PC-9 (cell line): ENCODE measurements at regions of chr3 and their contacts with region 1.

Region 1: DNA sequence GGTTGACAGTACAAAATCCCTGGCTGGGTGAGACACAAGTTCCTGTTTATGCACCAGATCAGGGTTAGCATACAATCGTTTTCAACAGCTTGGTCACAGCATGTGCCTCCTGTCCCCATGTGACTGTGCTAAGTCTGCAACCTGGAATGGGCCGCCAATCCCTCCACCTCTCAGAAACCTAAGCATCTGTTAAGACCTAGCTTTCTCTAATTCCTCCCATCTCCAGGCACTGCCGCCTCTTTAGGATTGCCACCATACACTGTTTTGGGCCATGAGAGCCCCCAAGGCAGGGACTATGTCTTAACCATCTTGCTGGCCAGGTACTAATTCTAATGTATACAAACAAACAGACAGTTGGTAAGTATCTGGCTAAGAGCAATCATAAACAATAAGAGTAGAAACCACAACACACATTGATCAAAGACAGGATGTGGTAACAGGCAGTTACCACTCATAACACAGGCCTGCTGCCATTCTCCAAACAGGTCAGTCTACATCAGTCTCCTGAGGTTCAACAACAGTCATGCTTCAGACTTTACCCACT is 25.6 kb downstream of the SEC22C start:
- DNase-seq: peak in 1 of 2 experiments; percentile 37
- H3K4me3 ChIP-seq: no peak overlapping the region
- H3K27ac ChIP-seq: no peak overlapping the region
- H3K4me1 ChIP-seq: no peaks in the 10 kb centered on the region
- H3K27me3 ChIP-seq: no peaks in the 10 kb centered on the region
- CTCF ChIP-seq: no peak

Region 2: GRCh38 chr3:42600111-42600988 is 44.2 kb after region 1 on chr3 and contains the start of gene NKTR:
- CTCF ChIA-PET with region 1: no interaction called
- POLR2A ChIA-PET with region 1: no interaction called
- intact Hi-C with region 1: no loop called
- DNase-seq: peak; percentile 98 to 99
- H3K4me3 ChIP-seq: peak within 1 kb of the TSS; percentile 74
- H3K27ac ChIP-seq: peak within 1 kb of the TSS; percentile 86
- H3K4me1 ChIP-seq: peaks cover 27% of the 10 kb centered on the region
- H3K27me3 ChIP-seq: no peaks in the 10 kb centered on the region
- CTCF ChIP-seq: no peak
- total RNA-seq, gene NKTR: 66.0 and 70.5 TPM in 2 replicates

Region 3: DNA sequence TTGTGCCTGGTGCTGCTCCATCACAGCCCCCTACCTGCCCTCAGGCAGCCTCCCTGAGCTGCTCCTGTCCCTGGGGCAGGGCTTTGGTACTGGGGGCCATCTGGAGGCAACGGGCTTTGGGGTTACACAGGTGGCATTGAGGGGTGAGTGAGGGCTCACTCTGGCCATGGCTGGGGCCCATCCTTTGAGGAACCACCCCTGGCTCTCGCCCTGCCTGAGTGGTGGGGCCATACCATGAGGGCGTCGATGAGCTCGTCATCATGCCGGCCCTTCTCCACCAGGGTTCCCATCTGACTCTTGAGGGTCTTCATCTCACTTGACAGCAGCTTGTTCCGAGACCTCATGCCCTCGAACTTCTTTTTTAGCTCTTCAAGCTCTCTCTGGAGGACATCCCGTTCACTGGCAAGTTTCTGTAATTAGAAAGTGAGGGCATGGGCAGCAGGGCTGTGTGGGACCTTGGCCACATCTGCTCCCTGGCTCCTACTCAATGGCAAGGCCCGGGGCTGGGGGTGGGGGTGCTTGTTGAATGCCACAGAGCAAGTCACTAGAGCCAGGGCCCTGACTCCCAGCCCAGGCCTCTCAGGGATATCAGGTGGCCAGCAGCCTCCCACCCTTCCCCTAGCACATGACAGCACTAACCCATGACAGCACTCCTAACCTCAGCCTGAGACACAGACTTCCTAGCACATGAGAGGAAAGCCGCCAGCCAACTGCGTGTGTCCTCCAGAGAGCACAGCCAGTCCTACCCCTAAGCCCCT is 183.4 kb after region 1 on chr3:
- CTCF ChIA-PET with region 1: no interaction called
- POLR2A ChIA-PET with region 1: no interaction called
- intact Hi-C with region 1: loop called (anchors 5 kb)
- DNase-seq: no peak
- H3K4me3 ChIP-seq: no peak overlapping the region
- H3K27ac ChIP-seq: no peak overlapping the region
- H3K4me1 ChIP-seq: no peaks in the 10 kb centered on the region
- H3K27me3 ChIP-seq: 0 out of 2 replicates have a peak, but pooled peaks cover 6% of the 10 kb centered on the region
- CTCF ChIP-seq: no peak

Region 4: GRCh38 chr3:42800251-42800650 is 244.1 kb after region 1 on chr3:
- CTCF ChIA-PET with region 1: no interaction called
- POLR2A ChIA-PET with region 1: no interaction called
- intact Hi-C with region 1: no loop called
- DNase-seq: no peak
- H3K4me3 ChIP-seq: no peak overlapping the region
- H3K27ac ChIP-seq: no peak overlapping the region
- H3K4me1 ChIP-seq: peaks cover 16% of the 10 kb centered on the region
- H3K27me3 ChIP-seq: no peaks in the 10 kb centered on the region
- CTCF ChIP-seq: no peak

Region 5: DNA sequence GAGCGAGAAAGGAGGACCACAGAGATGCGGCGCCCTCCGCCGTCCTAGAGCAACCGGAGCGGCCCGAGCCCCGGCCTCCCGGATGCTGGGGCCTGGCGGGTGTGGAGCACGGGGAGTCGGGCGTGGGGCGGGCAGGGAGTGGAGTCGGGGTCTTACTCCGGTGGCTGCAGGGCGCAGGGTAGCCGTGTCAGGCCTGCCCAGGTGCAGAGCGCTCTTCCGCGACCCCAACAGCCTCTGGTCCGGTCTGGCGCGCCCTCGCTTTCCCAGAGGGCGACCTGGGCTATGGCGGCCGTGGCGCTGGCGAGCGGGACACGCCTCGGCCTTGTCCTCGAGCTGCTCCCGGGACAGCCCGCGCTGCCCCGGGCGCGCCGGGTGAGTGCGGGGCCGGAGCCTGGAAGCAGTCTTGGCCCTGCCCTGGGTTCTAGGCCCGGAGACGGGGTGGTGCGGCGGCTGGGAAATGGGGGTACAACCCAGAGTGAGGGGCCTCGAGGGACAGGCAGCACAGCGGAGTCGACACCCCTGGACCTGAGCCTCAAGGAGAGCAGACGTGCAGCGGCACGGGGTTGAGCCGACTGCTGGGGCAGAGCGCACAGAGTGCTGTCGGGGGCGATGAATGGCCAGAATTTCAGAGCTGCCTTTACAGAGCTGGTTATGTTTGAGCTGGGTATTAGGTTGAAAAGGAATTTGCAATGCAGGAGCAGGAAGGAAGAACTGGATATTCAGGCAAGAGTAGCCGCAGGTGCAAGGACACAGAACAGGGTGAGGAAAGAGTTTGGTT is 350.1 kb after region 1 on chr3 and contains the start of gene ZNF662:
- CTCF ChIA-PET with region 1: no interaction called
- POLR2A ChIA-PET with region 1: no interaction called
- intact Hi-C with region 1: no loop called
- DNase-seq: peak; percentile 43 to 53
- H3K4me3 ChIP-seq: peak within 1 kb of the TSS; percentile 48; the same call in 1 of the 2 replicates
- H3K27ac ChIP-seq: no peak within 1 kb of the TSS
- H3K4me1 ChIP-seq: peaks cover 13% of the 10 kb centered on the region
- H3K27me3 ChIP-seq: no peaks in the 10 kb centered on the region
- CTCF ChIP-seq: no peak
- total RNA-seq, gene ZNF662: 7.5 and 9.2 TPM in 2 replicates